CD14-positive monocyte (primary cell): ENCODE measurements at regions of chr7 and their contacts with region 1.

Region 1: GRCh38 chr7:108525985-108526767 is at the start of gene PNPLA8:
- DNase-seq: peak; percentile 99 to 100 (median 100)
- H3K4me3 ChIP-seq: peak within 1 kb of the TSS; percentile 82 to 98 (median 82)
- H3K4me3 Mint-ChIP-seq: peak within 1 kb of the TSS; percentile 96 to 99
- H3K27ac ChIP-seq: peak within 1 kb of the TSS; percentile 96 to 100
- H3K27ac Mint-ChIP-seq: peak within 1 kb of the TSS; percentile 99 to 100 (median 100)
- H3K4me1 ChIP-seq: peaks cover 23 to 34% of the 10 kb centered on the region in 2 donors
- H3K4me1 Mint-ChIP-seq: peaks cover 33% of the 10 kb centered on the region
- H3K27me3 ChIP-seq: no peaks in the 10 kb centered on the region
- H3K27me3 Mint-ChIP-seq: peaks cover 1 to 5% (median 4%) of the 10 kb centered on the region in 3 donors
- CTCF ChIP-seq: no peak
- polyA plus RNA-seq, gene PNPLA8: 10.2 to 80.0 (median 55.5) TPM

Region 2: DNA sequence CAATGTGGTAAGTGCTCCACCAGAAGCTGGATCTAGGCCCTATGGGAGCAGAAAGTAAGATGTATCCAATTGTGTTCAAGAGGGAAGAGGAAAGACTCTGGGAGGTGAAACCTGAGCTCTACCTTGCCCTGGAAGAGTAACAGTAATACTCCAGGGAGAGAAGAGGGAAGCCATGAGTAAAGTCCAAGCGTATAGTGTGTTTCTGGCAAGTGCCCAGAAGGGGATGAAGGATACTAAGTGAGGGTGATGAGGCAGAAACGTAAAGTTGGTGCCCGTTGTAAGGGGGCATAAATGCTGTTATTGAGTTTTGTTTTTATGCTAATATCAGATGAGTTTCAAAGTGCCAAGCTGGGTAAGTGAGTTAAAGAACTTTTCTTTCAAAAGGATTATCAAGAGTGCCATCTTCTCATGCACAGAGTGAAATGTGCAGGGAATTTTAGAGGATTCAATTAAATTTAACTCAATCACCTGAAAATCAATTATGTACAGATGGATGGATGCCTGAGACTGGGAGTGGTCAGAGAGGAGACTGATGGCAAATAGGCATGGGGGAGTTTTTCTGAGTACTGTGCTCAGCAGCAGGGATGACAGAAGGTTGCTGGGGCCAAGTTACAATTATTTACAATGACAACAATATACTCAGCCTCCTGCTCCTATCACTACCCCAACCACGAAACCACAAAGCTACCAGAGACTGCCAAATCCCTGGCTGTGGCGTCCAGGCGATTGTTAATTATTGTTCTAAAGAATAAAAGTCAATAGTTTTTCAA is 272.7 kb before region 1 on chr7:
- intact Hi-C with region 1: no loop called
- DNase-seq: no peak
- H3K4me3 ChIP-seq: no peak overlapping the region
- H3K4me3 Mint-ChIP-seq: no peak overlapping the region
- H3K27ac ChIP-seq: no peak overlapping the region
- H3K27ac Mint-ChIP-seq: peak overlapping the region in 1 of 7 donors; percentile 6
- H3K4me1 ChIP-seq: no peaks in the 10 kb centered on the region
- H3K4me1 Mint-ChIP-seq: no peaks in the 10 kb centered on the region
- H3K27me3 ChIP-seq: no peaks in the 10 kb centered on the region
- H3K27me3 Mint-ChIP-seq: peaks cover 2 to 4% (median 2%) of the 10 kb centered on the region in 3 donors
- CTCF ChIP-seq: no peak

Region 3: GRCh38 chr7:108415821-108416536 is 110.2 kb before region 1 on chr7:
- intact Hi-C with region 1: no loop called
- DNase-seq: peak; percentile 49 to 77 (median 65)
- H3K4me3 ChIP-seq: peak overlapping the region in 1 of 3 experiments; percentile 59
- H3K4me3 Mint-ChIP-seq: peak overlapping the region; percentile 28 to 76
- H3K27ac ChIP-seq: peak overlapping the region; percentile 67 to 80
- H3K27ac Mint-ChIP-seq: peak overlapping the region; percentile 86 to 96 (median 93)
- H3K4me1 ChIP-seq: peaks cover 38 to 41% of the 10 kb centered on the region in 2 donors
- H3K4me1 Mint-ChIP-seq: peaks cover 42% of the 10 kb centered on the region
- H3K27me3 ChIP-seq: peaks cover 21 to 26% of the 10 kb centered on the region in 2 donors
- H3K27me3 Mint-ChIP-seq: peaks cover 12 to 25% (median 17%) of the 10 kb centered on the region in 3 donors
- CTCF ChIP-seq: no peak

Region 4: GRCh38 chr7:108569381-108570145 is 43.4 kb after region 1 on chr7 and contains the starts of genes DNAJB9 and THAP5:
- intact Hi-C with region 1: loop called (anchors 2 kb)
- DNase-seq: peak; percentile 100
- H3K4me3 ChIP-seq: peak within 1 kb of the TSS; percentile 77 to 87 (median 78)
- H3K4me3 Mint-ChIP-seq: peak within 1 kb of the TSS; percentile 93 to 96
- H3K27ac ChIP-seq: peak within 1 kb of the TSS; percentile 94 to 99
- H3K27ac Mint-ChIP-seq: peak within 1 kb of the TSS; percentile 94 to 99 (median 98)
- H3K4me1 ChIP-seq: peaks cover 21 to 38% of the 10 kb centered on the region in 2 donors
- H3K4me1 Mint-ChIP-seq: peaks cover 23% of the 10 kb centered on the region
- H3K27me3 ChIP-seq: no peaks in the 10 kb centered on the region
- H3K27me3 Mint-ChIP-seq: no peaks in the 10 kb centered on the region
- CTCF ChIP-seq: no peak
- polyA plus RNA-seq, gene DNAJB9: 18.1 to 20.7 (median 18.4) TPM
- polyA plus RNA-seq, gene THAP5: 3.0 to 10.7 (median 9.9) TPM